Sciatic nerve (tissue), 2 donors: ENCODE measurements at regions of chr22 and their contacts with region 1.

Region 1: DNA sequence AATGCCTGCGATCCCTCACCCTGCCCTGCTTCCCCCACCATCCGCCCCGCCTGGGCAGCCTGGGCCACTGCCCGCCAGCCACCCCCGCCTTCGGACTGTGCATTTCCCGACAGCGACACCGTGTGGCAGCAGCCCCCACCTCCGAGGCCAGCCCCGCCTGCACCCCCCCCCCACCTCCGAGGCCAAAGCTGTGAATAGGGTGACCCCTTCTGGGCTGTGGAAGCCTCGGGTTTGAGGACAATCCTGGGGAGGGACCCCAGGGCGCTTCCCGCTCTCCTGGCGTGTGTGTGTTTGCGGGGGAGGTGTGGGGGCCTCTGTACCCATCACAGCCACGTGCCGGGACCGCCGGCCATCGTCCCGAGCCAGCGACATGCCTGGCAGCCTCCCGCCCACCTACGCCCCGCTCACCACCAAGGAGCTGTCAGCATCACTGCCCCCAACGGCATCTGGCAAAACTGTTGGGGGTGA is 33.8 kb upstream of the PPARA start:
- DNase-seq: peak; percentile 98
- ATAC-seq: peak; percentile 75

Region 2: DNA sequence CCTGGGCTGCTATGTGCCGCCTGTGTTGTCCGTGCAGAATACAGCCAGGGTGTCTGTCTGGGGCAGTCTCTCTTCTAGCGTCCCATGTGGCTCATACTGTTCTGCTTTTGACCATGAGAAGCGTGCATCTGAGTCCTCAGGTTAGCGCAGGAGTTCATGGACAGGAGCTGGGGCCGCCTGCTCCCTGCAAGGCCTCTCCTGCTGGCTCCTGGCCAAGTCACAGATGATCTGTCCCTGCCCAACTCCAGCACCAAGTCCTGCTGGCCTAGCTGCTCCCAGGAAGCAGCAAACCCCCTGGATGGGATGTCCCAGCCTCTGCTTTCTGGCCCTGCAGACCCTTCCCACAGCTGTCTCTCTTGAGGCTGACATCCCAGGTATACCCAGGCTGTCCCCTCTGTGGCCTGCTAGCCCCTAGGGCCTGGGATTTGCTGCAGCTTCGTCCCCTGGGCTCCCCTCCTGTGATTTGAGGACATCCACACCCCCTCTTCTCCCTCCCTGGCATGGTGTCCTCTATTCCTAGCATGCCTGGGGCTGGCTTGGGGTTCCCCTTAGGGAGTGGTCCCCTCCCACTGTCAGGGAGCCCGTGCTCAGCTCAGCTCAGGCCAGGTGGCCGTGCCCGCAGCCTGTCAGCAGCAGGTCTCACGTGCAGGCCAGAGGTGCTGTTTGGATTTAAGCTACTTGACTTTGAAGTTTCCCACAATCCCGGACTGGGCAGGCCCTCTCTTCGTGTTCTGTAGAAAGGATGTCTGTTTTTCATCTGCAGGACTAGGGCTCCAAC is 1396.8 kb before region 1 on chr22:
- intact Hi-C with region 1: loop called (anchors 5 kb)
- DNase-seq: no peak
- ATAC-seq: no peak

Region 3: DNA sequence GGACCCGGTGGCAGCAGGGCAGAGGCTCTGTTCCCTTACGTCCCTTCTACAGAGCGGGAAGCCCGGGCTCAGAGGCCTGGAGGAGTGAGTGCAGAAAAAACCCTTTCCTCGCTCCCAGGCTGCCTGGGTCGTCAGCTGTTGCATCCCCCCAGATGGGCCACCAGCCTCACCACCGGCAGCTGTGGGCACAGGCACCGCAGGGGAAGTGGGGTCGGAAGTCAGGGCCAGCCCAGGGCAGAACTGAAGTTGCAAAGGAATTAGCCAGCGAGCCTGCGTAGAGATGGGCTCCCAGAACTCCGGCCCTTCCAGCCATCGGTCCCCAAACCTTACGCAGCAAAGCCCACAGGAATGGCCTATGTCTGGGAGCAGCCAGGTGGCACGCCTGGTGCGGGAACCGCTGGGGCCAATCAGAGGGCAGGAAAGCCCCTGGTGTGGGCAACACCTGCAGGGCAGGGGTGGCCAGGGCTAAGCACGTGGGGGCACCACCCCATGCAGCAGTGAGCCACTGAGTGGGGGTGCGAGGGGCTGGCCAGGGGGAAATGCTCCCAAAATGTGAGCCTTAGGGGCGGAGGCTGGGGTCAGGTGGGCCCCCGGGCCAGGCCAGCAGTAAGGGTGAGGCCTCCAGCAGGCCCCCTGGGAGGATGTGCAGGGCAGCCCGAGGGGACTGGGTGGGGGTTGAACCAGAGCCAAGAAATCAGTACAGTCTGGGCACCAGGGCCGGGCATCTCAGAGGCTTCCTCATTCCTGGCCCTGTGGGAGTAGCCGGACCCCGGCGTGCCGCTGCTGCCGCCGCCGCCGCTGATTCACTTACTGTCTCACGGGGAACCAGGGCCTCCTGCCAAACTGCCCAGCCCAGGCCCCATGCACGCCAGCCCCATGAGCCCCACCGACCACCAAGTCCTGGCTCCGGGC is 197.8 kb before region 1 on chr22:
- intact Hi-C with region 1: no loop called
- DNase-seq: no peak
- ATAC-seq: no peak

Region 4: DNA sequence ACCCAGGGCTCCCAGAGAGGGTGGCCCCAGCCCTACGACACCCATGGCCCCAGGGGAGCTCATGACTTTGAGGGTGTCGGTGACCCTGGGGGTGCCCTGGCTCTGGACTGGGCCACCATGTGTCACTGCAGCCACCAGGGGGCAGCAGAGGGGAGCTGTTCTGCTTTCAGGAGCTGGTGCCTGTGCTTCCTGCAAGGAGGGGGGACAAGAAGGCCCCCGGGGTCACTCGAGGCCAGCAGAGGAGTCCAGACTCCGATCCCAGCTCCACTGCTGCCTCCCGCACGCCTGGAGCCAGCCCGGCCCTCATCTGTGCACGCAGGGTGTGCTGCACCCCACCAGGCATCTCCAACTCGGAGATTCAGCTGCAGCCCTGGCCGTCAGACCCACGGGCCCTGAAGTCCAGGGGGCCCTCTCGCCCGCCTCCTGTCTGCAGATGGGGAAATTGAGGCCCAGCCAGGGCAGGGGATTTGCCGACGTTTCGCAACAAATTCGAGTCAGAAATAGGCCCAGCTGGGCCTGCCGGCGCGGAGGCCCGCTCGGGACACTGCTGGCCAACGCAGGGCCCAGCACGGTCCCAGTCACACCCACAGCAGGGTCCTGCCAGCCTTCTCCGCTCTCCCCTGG is 110.0 kb before region 1 on chr22:
- intact Hi-C with region 1: loop called (anchors 2 kb)
- DNase-seq: peak; percentile 98
- ATAC-seq: peak; percentile 84

Region 5: DNA sequence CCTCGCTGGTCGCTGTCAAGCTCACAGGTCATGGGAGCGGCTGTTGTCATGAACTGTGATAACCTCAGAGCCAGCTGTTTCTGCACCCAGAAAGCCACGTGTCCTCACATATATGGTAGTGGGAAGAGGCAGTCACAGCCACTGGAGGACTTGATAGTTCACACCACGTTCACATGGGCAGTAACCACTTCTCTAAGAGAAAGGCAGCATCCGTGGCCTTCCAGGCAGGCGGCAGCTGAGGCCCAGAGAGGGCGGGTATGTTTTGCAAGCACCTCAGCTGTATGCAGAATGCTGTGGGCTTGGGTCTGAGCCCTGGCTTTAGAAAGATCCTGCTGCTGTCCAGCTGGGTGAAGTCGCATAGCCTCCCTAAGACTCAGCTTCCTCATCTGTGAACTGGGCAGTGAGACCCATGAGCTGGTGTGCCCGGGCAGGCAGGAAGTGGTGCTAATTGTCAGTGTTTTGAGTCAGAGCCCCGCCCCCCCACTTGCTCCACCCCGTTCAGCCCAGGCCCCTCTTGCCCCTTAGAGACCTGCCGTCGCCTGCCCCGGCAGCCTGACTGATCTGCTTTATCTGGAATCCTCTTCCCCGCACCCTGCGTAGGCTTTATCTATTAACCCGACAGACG is 164.6 kb after region 1 on chr22:
- intact Hi-C with region 1: no loop called
- DNase-seq: no peak
- ATAC-seq: peak; percentile 57